Activated naive CD4-positive, alpha-beta T cell treated with anti-CD3 and anti-CD28 coated beads for 36 hours (primary cell): ENCODE measurements at regions of chr6 and their contacts with region 1.

Region 1: GRCh38 chr6:32558426-32559057 is 28.5 kb upstream of the HLA-DRB5 start:
- DNase-seq: peak; percentile 4
- H3K4me3 Mint-ChIP-seq: no peak overlapping the region
- H3K27ac Mint-ChIP-seq: no peak overlapping the region
- H3K4me1 Mint-ChIP-seq: no peaks in the 10 kb centered on the region
- H3K27me3 Mint-ChIP-seq: peaks cover 2% of the 10 kb centered on the region

Region 2: DNA sequence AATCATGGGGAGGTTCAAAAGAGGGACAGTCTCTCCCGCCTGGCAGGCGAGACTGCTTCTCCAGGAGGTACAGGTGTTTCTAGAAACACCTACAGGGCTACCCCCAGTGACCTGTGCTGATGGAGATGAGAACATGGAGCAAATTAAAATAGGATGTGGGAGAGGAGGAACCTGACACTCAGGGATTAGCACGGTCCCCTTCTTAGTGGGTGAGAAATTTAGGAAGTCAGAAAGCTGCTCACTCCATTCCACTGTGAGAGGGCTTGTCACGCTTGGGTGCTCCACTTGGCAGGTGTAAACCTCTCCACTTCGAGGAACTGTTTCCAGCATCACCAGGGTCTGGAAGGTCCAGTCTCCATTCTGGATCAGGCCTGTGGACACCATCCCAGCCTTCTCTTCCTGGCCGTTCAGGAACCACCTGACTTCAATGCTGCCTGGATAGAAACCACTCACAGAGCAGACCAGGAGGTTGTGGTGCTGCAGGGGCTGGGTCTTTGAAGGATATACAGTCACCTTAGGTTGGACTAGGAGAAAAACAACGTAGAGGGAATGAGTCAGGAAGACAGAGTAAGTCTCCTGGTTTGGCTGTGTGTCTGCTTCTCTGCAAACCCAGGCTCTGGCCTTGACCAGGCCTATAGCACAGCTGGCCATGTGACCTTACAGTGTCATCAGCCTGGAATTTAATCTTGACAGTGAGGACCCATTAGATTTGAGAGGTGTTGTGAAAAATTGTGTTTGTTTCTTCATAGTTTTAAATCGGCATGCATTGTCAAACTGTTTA is 23.0 kb after region 1 on chr6:
- CTCF ChIA-PET with region 1: no interaction called
- intact Hi-C with region 1: loop called (anchors 1 kb)
- DNase-seq: no peak
- H3K4me3 Mint-ChIP-seq: no peak overlapping the region
- H3K27ac Mint-ChIP-seq: no peak overlapping the region
- H3K4me1 Mint-ChIP-seq: peaks cover 4% of the 10 kb centered on the region
- H3K27me3 Mint-ChIP-seq: peaks cover 4% of the 10 kb centered on the region

Region 3: GRCh38 chr6:33200219-33201146 is 641.9 kb after region 1 on chr6 and contains the starts of genes RXRB and SLC39A7:
- CTCF ChIA-PET with region 1: no interaction called
- intact Hi-C with region 1: no loop called
- DNase-seq: peak; percentile 100
- H3K4me3 Mint-ChIP-seq: peak within 1 kb of the TSS; percentile 98
- H3K27ac Mint-ChIP-seq: peak within 1 kb of the TSS; percentile 97
- H3K4me1 Mint-ChIP-seq: peaks cover 60% of the 10 kb centered on the region
- H3K27me3 Mint-ChIP-seq: no peaks in the 10 kb centered on the region
- total RNA-seq, gene RXRB: 50.4 to 50.6 TPM
- total RNA-seq, gene SLC39A7: 35.9 to 39.5 TPM